Heart left ventricle (tissue), 16 donors: ENCODE measurements at regions of chr4 and their contacts with region 1.

Region 1: DNA sequence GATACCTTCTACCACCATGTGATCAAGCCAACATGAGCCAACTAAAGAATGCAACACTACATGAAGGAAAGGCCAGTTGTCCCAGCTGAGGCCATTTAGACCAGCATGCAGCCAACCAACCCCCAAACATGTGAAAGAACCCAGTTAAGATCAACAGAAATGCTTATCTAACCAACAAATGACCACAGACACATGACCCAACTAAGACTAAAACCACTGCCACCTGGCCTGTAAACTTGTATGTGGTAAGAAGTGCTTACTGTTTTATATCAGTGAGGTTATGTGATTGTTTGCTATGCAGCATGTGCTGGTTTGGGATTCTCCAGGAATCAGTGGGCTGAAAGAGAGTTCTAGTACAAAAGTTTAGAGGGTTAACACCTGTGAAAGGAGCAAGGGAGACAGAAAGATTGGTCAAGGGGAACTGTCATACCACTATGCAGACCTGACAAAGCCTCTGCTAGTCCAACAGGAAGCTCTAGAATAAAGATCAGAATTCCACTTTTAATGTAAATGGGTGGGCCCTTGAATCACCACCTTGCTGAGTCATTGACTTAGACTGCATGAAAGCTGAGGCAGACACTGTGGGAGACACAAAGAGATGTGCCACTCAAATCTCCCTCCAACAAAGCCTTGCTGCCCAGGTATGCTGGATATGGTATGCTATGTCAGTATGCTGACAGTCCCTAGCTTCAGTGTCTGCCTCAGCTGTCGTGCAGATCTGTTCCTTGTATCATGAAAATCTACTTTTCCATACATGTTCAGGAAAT is 6.1 kb upstream of the SH3D19 start:
- DNase-seq: no peak
- ATAC-seq: no peak
- H3K4me3 ChIP-seq: no peak overlapping the region
- H3K27ac ChIP-seq: no peak overlapping the region
- H3K4me1 ChIP-seq: no peaks in the 10 kb centered on the region
- H3K27me3 ChIP-seq: no peaks in the 10 kb centered on the region
- CTCF ChIP-seq: no peak
- POLR2A ChIP-seq: no peak

Region 2: GRCh38 chr4:150849016-150849415 is 482.4 kb before region 1 on chr4:
- intact Hi-C with region 1: no loop called
- DNase-seq: no peak
- ATAC-seq: no peak
- H3K4me3 ChIP-seq: no peak overlapping the region
- H3K27ac ChIP-seq: no peak overlapping the region
- H3K4me1 ChIP-seq: peaks cover 0 to 12% (median 0%) of the 10 kb centered on the region in 12 donors
- H3K27me3 ChIP-seq: no peaks in the 10 kb centered on the region
- CTCF ChIP-seq: no peak
- POLR2A ChIP-seq: no peak

Region 3: DNA sequence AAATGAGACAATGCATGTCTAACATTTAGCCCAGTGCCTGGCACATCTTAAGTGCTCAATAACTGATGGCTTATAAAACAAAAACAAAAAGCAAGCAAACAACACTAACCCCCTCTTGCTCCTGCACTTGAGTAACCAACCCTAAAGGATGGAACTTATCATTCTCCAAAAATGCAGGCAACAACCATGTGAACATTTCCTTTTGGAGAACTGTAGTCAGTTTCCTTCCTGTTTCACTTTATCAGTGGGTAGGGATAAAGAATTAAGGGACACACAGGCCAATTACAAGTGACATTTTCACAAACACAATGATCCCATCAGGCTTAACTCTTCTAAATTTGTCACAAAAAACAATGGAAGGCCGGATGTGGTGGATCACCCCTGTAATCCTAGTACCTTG is 201.7 kb before region 1 on chr4:
- intact Hi-C with region 1: loop called in 1 of 10 experiments (anchors 10 kb)
- DNase-seq: no peak
- ATAC-seq: peak in 3 of 4 donors; percentile 18 to 22 (median 20)
- H3K4me3 ChIP-seq: no peak overlapping the region
- H3K27ac ChIP-seq: peak overlapping the region in 1 of 12 donors; percentile 14
- H3K4me1 ChIP-seq: peaks cover 0 to 4% (median 0%) of the 10 kb centered on the region in 12 donors
- H3K27me3 ChIP-seq: no peaks in the 10 kb centered on the region
- CTCF ChIP-seq: no peak
- POLR2A ChIP-seq: no peak